Activated T-helper 2 cell treated with anti-CD3 and anti-CD28 coated beads, Interferon-gamma antibody, Interleukin-2, Interleukin-4, amounts not matched to agents 10 μg/mL and 5 μg/mL and 100 μg/mL, durations not matched to agents 14 hours and 24 hours and 36 hours (primary cell): ENCODE measurements at regions of chr1 and their contacts with region 1.

Region 1: GRCh38 chr1:180586671-180587155 is 27.9 kb downstream of the OVAAL start:
- DNase-seq: no peak
- H3K4me3 Mint-ChIP-seq: no peak overlapping the region
- H3K27ac Mint-ChIP-seq: peak overlapping the region; percentile 72
- H3K4me1 Mint-ChIP-seq: peaks cover 26% of the 10 kb centered on the region
- H3K27me3 Mint-ChIP-seq: no peaks in the 10 kb centered on the region

Region 2: GRCh38 chr1:180462102-180462501 is 124.6 kb before region 1 on chr1:
- intact Hi-C with region 1: no loop called
- DNase-seq: no peak
- H3K4me3 Mint-ChIP-seq: no peak overlapping the region
- H3K27ac Mint-ChIP-seq: no peak overlapping the region
- H3K4me1 Mint-ChIP-seq: peaks cover 9% of the 10 kb centered on the region
- H3K27me3 Mint-ChIP-seq: no peaks in the 10 kb centered on the region

Region 3: DNA sequence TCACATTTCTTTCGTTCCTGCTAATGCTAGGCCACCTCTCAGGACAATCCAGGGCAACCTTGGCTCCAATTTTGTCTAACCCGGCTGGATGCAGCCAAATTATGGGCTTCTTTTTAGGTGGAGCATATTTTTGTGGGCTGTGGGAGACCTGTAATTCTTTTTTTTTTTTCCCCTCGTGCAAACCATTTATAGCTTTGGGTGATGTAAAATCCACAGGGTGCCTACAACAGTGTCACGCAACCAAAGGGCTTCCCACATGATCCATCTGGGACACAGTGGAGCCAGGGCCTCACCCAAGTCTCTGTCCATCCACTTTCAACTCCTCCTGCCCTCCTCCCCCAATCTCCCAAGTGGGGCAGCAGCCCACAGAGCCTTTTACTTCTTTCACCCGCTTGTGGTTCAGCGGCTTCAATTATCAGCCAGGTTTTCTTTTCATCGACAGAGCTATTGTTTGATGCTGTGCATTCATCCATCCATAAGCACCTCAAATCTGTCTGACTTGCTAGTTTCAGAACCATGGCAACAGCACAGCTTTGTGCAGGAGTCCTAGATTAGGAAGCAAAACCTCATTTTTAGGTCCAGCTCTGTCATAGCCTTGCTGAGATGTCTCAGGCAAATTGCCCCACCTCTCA is 37.9 kb before region 1 on chr1:
- intact Hi-C with region 1: no loop called
- DNase-seq: no peak
- H3K4me3 Mint-ChIP-seq: no peak overlapping the region
- H3K27ac Mint-ChIP-seq: no peak overlapping the region
- H3K4me1 Mint-ChIP-seq: no peaks in the 10 kb centered on the region
- H3K27me3 Mint-ChIP-seq: peaks cover 9% of the 10 kb centered on the region

Region 4: GRCh38 chr1:180571832-180572636 is 14.7 kb before region 1 on chr1:
- intact Hi-C with region 1: loop called (anchors 1 kb)
- DNase-seq: no peak
- H3K4me3 Mint-ChIP-seq: peak overlapping the region; percentile 0
- H3K27ac Mint-ChIP-seq: peak overlapping the region; percentile 18
- H3K4me1 Mint-ChIP-seq: peaks cover 24% of the 10 kb centered on the region
- H3K27me3 Mint-ChIP-seq: peaks cover 5% of the 10 kb centered on the region